PC-9 (cell line): ENCODE measurements at regions of chr17 and their contacts with region 1.

Region 1: DNA sequence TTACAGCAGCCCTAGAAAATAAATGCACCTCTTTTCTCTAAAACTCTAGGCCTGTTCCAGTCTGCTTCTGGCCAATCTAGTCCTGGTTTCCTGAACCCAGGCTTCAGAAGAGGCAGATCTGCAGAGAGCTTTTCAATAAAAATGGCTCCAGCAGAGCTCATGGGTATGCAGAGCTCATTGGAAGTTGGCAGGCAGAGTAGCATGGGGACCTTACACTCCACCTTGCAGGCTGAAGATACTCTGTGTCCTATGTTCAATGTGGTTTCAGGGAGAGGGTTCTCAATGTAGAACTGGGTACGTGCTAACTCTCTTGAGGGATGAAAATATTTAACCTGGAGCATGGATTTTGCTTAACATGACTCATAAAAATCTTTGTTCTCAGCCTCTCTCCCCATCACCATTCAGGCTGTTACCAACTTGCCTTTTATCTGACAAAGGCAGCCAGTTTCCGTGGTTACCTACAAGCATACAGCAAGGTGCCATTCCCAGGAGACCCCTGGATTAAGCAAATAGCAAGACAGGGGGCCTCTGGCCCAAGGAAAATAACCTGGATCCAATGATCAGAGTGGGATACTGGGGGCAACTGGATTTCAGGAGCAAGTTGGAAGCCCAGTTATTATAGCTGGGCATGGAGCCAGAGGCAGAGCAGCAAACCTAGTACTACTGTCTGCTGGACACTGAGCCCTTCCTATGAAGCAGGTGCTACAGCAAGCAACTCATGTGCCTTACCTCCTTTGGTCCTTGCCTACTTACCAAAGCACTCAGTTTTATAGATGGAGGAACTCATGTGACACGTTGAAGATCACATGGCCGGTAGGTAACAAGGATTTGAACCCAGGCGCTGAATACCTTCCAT is 98.2 kb upstream of the DHX40 start:
- DNase-seq: no peak
- H3K4me3 ChIP-seq: no peak overlapping the region
- H3K27ac ChIP-seq: no peak overlapping the region
- H3K4me1 ChIP-seq: no peaks in the 10 kb centered on the region
- H3K27me3 ChIP-seq: no peaks in the 10 kb centered on the region
- CTCF ChIP-seq: no peak

Region 2: DNA sequence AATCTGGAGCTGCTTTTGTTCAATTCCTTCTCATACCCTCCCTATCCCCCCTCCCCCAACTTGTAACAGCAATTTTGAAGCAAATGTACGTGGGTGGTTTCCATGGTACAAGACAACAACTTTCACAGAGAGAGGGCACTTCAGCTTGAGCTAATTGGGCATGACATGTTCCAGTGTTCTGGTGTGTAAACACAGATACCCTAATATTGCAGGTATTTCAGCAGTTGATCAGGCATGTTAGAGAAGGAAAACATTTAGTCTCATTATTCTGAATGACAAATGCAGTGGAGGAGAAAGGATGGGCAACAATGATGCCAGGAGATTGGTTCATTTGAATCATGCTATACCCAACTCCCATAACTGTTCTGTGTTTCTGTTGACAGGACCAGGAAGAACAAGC is 498.0 kb before region 1 on chr17:
- CTCF ChIA-PET with region 1: no interaction called
- POLR2A ChIA-PET with region 1: no interaction called
- intact Hi-C with region 1: no loop called
- DNase-seq: no peak
- H3K4me3 ChIP-seq: no peak overlapping the region
- H3K27ac ChIP-seq: no peak overlapping the region
- H3K4me1 ChIP-seq: no peaks in the 10 kb centered on the region
- H3K27me3 ChIP-seq: no peaks in the 10 kb centered on the region
- CTCF ChIP-seq: no peak

Region 3: DNA sequence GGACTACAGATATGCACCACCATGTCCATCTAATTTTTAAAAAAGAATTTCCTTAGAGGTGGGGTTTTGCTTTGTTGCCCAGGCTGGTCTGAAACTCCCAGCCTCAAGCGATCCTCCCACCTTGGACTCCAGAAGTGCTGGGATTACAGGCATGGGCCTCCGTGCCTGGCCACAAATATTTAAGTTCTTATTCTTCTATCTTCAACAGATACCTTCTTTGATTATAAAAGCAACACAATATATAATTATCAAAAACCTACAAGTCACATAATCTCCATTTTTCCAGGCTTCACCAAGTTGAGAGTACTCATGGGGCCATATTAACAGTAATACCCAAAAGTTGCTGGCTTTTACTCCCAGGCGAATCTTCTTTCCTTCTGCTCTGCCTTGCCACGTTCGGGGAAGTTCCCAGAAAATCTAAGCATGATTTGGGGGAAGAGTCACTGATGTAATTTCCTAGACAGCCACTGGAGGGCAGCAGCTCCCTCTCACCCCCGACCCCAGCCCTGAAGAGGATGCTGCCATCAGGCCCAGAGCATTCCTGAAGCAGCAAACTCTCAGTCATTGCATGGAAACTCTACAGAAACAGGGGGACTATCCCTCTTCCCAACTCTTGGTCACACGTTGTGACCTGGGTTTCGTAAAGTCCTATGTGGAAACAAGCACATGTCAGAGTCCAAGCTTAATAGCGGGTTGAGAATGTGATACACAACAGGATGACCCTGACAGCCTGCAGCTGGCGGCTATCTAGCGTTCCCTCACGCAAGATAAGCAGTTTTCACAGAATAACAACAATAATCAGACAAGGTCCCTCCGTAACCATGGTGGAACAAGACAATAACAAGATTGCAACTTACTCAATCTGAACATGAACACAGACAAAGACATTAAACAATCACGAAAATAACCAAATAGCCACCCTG is 54.3 kb after region 1 on chr17:
- CTCF ChIA-PET with region 1: interaction called, 3 read pairs
- POLR2A ChIA-PET with region 1: no interaction called
- intact Hi-C with region 1: loop called (anchors 2 kb)
- DNase-seq: peak in 1 of 2 experiments; percentile 59
- H3K4me3 ChIP-seq: no peak overlapping the region
- H3K27ac ChIP-seq: no peak overlapping the region
- H3K4me1 ChIP-seq: peaks cover 5% of the 10 kb centered on the region; the same call in 1 of the 2 replicates
- H3K27me3 ChIP-seq: no peaks in the 10 kb centered on the region
- CTCF ChIP-seq: peak; percentile 97

Region 4: GRCh38 chr17:59527325-59527917 is 60.2 kb after region 1 on chr17:
- CTCF ChIA-PET with region 1: no interaction called
- POLR2A ChIA-PET with region 1: interaction called, 12 read pairs
- intact Hi-C with region 1: no loop called
- DNase-seq: no peak
- H3K4me3 ChIP-seq: no peak overlapping the region
- H3K27ac ChIP-seq: no peak overlapping the region
- H3K4me1 ChIP-seq: no peaks in the 10 kb centered on the region
- H3K27me3 ChIP-seq: no peaks in the 10 kb centered on the region
- CTCF ChIP-seq: no peak